T-cell (primary cell): ENCODE measurements at regions of chr7 and their contacts with region 1.

Region 1: DNA sequence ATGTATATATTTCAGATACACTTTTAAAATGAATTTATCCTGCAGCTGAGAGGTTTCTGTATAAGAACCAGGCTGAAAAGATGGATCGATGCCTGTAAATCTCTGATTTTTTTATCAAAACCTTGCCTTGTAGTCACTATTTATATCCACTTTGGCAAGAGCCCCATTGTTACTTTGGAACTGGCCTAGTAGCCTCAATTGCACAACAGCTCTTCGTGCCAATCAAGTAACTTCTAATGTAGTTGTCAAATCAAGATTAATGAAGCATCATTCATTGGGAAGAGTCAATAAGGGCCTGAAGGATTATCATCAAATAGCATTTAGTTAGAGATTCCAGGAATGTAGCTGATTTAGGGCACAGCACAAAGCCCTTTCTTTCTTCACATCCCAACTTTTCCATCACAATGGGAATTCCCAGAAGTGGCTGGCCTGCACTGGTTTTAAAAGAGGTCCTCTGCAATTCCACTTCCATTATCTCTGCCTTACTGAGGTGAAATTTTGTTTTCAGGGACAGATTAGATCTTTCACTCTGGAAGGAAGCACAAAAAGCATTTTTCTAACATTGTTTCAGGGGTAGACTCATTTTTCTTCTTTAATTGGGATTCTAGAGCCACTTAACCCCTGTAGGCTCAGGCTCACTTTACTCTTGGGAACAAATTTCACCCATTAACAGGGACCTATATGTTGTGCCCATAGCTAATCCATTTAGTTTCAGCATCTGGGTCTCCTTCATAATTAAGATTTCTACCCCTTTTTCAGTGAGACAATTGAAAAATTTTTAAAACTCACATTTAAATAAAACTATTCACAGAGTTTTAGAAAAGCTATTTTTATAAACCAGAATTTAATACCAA is 97.8 kb downstream of the CALCR start:
- DNase-seq: no peak
- ATAC-seq: no peak
- H3K4me3 ChIP-seq: no peak overlapping the region
- H3K4me3 Mint-ChIP-seq: no peak overlapping the region
- H3K27ac ChIP-seq: no peak overlapping the region
- H3K27ac Mint-ChIP-seq: no peak overlapping the region
- H3K4me1 ChIP-seq: no peaks in the 10 kb centered on the region
- H3K4me1 Mint-ChIP-seq: no peaks in the 10 kb centered on the region
- H3K27me3 ChIP-seq: no peaks in the 10 kb centered on the region
- H3K27me3 Mint-ChIP-seq: peaks cover 0 to 4% of the 10 kb centered on the region in 2 donors

Region 2: GRCh38 chr7:91843831-91844230 is 1632.9 kb before region 1 on chr7:
- CTCF ChIA-PET with region 1: no interaction called
- POLR2A ChIA-PET with region 1: interaction called in 1 of 2 experiments, 11 read pairs
- DNase-seq: no peak
- ATAC-seq: no peak
- H3K4me3 ChIP-seq: no peak overlapping the region
- H3K4me3 Mint-ChIP-seq: no peak overlapping the region
- H3K27ac ChIP-seq: no peak overlapping the region
- H3K27ac Mint-ChIP-seq: no peak overlapping the region
- H3K4me1 ChIP-seq: no peaks in the 10 kb centered on the region
- H3K4me1 Mint-ChIP-seq: no peaks in the 10 kb centered on the region
- H3K27me3 ChIP-seq: no peaks in the 10 kb centered on the region
- H3K27me3 Mint-ChIP-seq: no peaks in the 10 kb centered on the region